Activated CD4-positive, alpha-beta memory T cell treated with anti-CD3 and anti-CD28 coated beads, Interleukin-2, amount 10 ng/mL, durations not matched to agents 7 days and 5 days (primary cell): ENCODE measurements at regions of chr11 and their contacts with region 1.

Region 1: DNA sequence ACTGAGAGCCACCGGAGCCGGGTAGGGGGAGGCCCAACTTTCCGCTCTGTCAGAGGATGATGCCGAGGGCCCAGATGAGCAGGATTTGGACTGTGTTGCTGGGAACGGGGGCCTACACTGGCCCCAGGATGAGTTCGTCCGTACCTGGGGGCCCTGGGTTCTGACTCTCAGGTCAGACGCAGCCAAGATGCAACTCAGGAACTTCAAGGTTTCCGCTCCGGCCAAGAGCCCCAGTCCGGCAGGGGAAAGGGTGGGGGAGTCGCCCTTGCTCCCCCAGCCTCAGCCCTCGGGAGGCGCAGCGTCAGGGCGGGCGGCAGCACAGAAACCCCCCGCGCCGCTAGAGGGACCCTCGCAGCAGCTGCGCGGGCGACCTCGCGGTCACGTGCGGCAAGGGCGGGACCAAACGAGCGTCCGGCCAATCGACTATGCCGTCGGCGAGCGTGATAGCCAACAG is 241 bp upstream of the ARL2 start:
- DNase-seq: peak; percentile 85
- H3K4me3 Mint-ChIP-seq: peak overlapping the region; percentile 94
- H3K27ac Mint-ChIP-seq: peak overlapping the region; percentile 98
- H3K4me1 Mint-ChIP-seq: peaks cover 30% of the 10 kb centered on the region
- H3K27me3 Mint-ChIP-seq: no peaks in the 10 kb centered on the region

Region 2: DNA sequence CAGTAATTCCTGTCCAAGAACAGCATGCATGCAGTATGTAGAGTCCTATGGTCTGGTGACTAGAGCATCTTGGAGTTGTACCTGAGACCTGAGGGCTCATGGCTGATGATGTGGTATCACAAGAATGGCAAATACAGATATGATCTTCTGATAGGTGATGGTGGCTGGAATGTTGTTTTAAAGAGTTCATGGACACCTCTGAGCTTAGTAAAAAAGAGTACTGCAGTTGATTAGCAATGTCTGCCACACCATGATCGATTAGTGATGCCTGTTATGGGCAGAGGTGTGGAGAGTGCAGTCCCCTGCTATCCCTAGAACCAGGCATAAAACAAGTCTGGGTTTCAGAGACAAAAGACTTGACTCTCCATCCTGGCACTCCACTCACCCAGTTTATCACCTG is 15.6 kb before region 1 on chr11:
- CTCF ChIA-PET with region 1: interaction called, 21 read pairs
- POLR2A ChIA-PET with region 1: interaction called, 9 read pairs
- DNase-seq: peak; percentile 27
- H3K4me3 Mint-ChIP-seq: peak overlapping the region; percentile 63
- H3K27ac Mint-ChIP-seq: peak overlapping the region; percentile 85
- H3K4me1 Mint-ChIP-seq: peaks cover 35% of the 10 kb centered on the region
- H3K27me3 Mint-ChIP-seq: no peaks in the 10 kb centered on the region

Region 3: DNA sequence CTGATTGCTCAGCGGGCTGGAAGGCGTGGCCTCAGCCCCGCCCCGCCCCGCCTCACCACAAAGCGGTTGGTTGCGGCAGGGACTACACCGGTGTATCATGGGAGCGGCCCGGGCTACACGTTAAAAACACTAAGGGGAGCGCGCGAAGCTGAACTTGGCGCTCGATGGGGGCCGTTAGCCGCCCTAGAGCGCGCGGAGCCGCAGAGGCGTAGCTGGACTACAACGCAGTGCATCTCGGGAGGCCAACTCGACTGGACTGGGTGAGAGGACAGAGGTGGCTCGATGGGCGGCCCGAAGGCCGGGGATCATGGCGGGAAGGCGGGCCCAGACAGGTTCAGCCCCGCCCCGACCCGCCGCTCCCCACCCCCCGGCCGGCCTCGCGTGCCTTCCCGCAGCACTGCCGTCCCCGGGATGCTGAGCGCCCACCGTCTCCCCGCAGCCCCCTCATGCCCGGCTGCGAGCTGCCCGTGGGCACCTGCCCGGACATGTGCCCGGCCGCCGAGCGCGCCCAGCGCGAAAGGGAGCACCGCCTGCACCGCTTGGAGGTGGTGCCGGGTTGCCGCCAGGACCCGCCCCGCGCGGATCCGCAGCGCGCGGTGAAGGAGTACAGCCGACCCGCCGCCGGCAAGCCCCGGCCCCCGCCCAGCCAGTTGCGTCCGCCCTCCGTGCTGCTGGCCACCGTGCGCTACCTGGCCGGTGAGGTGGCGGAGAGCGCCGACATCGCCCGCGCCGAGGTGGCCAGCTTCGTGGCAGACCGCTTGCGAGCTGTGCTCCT is 27.3 kb after region 1 on chr11 and contains the start of gene SAC3D1:
- CTCF ChIA-PET with region 1: interaction called, 25 read pairs
- POLR2A ChIA-PET with region 1: interaction called, 17 read pairs
- DNase-seq: peak; percentile 95
- H3K4me3 Mint-ChIP-seq: peak within 1 kb of the TSS; percentile 91
- H3K27ac Mint-ChIP-seq: peak within 1 kb of the TSS; percentile 97
- H3K4me1 Mint-ChIP-seq: peaks cover 41% of the 10 kb centered on the region
- H3K27me3 Mint-ChIP-seq: no peaks in the 10 kb centered on the region
- total RNA-seq, gene SAC3D1: 24.2 to 24.8 TPM

Region 4: GRCh38 chr11:65053827-65054508 is 40.2 kb after region 1 on chr11:
- CTCF ChIA-PET with region 1: no interaction called
- POLR2A ChIA-PET with region 1: no interaction called
- DNase-seq: no peak
- H3K4me3 Mint-ChIP-seq: no peak overlapping the region
- H3K27ac Mint-ChIP-seq: peak overlapping the region; percentile 59
- H3K4me1 Mint-ChIP-seq: peaks cover 19% of the 10 kb centered on the region
- H3K27me3 Mint-ChIP-seq: no peaks in the 10 kb centered on the region

Region 5: GRCh38 chr11:65083834-65084597 is 70.3 kb after region 1 on chr11 and contains the starts of genes CDCA5 and ZFPL1:
- CTCF ChIA-PET with region 1: interaction called, 16 read pairs
- POLR2A ChIA-PET with region 1: interaction called, 9 read pairs
- DNase-seq: peak; percentile 96
- H3K4me3 Mint-ChIP-seq: peak within 1 kb of the TSS; percentile 91
- H3K27ac Mint-ChIP-seq: peak within 1 kb of the TSS; percentile 88
- H3K4me1 Mint-ChIP-seq: peaks cover 62% of the 10 kb centered on the region
- H3K27me3 Mint-ChIP-seq: no peaks in the 10 kb centered on the region
- total RNA-seq, gene CDCA5: 98.2 to 104 TPM
- total RNA-seq, gene ZFPL1: 30.1 to 31.6 TPM

Region 6: DNA sequence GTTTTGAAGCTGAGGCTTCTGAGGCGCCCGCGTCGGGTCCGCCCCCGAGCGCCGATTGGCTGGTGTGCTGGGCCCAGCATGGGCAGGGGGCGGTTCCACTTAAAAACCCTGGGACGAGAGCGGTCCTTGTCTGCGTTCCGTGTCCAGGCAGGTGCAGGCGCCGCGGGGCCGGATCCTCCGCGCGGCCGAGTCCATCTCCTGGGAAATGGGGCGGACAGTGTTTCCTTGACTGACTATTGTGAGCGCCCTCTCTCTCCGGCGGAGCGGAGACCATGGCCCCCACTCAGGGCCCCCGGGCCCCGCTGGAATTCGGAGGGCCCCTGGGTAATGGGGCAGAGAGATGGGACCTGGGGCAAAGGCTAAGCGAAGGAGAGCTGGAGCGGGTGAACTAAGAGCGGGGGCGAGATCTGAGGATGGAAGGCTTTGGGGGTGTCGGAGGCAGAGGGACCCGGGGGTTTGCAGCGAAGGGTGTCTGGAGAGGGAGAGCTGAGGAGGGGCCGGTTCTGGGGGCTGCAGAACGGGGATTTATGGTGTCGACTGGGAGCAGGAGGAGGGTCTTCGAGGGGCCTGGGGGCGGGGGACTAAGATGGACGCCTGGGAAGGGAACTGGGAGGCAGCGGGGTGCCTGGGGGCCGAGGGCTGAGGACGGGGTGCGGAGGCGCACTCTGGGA is 98.2 kb after region 1 on chr11 and contains the start of gene TM7SF2:
- CTCF ChIA-PET with region 1: interaction called, 16 read pairs
- POLR2A ChIA-PET with region 1: interaction called, 11 read pairs
- DNase-seq: peak; percentile 96
- H3K4me3 Mint-ChIP-seq: peak within 1 kb of the TSS; percentile 87
- H3K27ac Mint-ChIP-seq: peak within 1 kb of the TSS; percentile 80
- H3K4me1 Mint-ChIP-seq: peaks cover 49% of the 10 kb centered on the region
- H3K27me3 Mint-ChIP-seq: no peaks in the 10 kb centered on the region
- total RNA-seq, gene TM7SF2: 27.2 to 28.4 TPM

Region 7: DNA sequence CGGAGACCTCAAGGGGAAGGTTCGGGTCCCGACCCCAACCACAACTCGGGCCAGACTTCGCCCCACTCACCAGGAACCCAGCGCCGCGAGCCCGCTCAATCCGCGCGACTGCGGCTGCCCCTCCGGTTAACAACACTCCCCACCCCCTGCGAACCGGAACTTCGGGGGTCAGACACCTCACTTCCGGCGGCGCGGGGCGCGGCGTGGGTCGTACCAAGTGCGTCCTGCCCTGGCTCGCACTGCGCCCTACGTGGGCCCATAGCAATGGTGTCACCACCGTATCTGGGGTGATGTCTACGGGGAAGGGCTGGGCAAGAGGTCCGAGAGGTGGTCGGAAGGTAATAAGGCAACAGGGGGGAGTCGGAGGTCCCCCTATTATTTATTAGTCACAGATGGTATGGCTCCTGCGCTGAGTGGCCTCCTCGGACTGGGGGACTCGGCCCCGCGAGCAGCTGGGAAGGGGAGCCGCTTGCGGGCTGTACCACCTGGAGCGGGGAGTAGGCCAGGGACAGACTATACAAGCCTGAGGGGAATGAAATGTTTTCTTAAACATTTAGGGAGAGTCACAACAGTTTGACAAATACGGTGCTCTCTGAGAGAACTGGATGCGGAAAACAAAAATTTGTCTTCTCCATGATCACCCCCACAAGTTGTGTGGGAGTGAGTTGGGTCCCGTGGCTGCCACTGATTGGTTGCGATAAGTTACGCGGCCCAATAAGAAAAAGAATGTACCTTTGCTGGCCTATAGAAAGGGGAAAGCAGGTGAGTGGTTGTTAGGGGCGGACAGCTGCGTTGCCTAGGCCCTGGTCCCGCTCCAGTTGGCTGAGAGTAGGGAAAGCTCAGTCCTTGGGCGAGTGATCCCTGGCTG is 120.9 kb after region 1 on chr11 and contains the start of gene SYVN1:
- CTCF ChIA-PET with region 1: interaction called, 8 read pairs
- POLR2A ChIA-PET with region 1: interaction called, 14 read pairs
- DNase-seq: peak; percentile 92
- H3K4me3 Mint-ChIP-seq: peak within 1 kb of the TSS; percentile 98
- H3K27ac Mint-ChIP-seq: peak within 1 kb of the TSS; percentile 98
- H3K4me1 Mint-ChIP-seq: peaks cover 35% of the 10 kb centered on the region
- H3K27me3 Mint-ChIP-seq: no peaks in the 10 kb centered on the region
- total RNA-seq, gene SYVN1: 39.4 to 42.2 TPM